ENCODE measurements at regions of chr18 and their contacts with region 1.

Region 1: DNA sequence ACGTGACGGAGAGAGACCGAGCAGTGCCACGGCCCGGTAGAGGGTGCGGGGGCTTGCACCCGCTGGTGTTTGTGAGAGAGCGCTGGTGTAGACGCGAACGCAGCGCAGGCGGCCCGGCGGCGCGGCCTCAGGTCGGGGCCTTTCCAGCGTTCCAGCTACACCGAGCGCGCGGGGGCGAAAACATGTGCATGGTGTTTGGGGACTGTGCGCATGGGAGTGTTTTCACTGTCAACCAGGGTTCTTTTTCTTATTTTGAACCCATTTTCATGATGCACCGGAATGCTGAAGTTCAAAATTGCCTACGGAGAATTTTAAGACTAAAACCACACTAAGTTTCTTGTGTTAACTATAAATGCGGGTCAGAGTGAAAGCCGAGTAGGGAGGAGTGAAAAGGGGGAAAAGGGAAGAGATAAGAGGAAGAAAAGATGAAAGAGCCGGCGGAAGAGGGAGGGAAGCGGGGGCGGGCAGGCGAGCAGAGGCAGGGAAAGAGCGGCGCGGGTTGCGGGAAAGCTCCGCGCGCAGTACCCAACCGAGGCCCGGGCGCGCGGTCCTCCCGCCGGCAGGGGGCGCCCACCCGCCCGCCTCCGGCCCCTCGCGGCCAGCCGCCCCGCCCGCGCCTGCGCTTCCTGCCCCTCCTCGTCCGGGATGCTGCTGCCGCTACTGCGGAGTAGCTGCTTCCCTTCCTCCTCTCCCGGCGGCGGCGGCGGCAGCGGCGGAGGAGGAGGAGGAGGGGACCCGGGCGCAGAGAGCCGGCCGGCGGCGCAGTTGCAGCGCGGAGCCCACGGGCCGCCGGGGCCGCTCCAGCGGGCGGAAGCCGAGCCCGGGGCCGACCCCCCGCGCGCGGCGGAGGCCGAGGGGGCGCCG is at the start of gene RAB12:
- DNase-seq: peak; percentile 87
- H3K4me3 Mint-ChIP-seq: peak within 1 kb of the TSS; percentile 89
- H3K27ac Mint-ChIP-seq: peak within 1 kb of the TSS; percentile 91
- H3K4me1 Mint-ChIP-seq: peaks cover 47% of the 10 kb centered on the region
- H3K27me3 Mint-ChIP-seq: no peaks in the 10 kb centered on the region
- total RNA-seq, gene RAB12: 11.0 to 11.9 TPM

Region 2: GRCh38 chr18:8478166-8478967 is 130.7 kb before region 1 on chr18:
- CTCF ChIA-PET with region 1: no interaction called
- intact Hi-C with region 1: loop called (anchors 2 kb)
- DNase-seq: peak; percentile 68
- H3K4me3 Mint-ChIP-seq: no peak overlapping the region
- H3K27ac Mint-ChIP-seq: no peak overlapping the region
- H3K4me1 Mint-ChIP-seq: no peaks in the 10 kb centered on the region
- H3K27me3 Mint-ChIP-seq: peaks cover 7% of the 10 kb centered on the region

Region 3: DNA sequence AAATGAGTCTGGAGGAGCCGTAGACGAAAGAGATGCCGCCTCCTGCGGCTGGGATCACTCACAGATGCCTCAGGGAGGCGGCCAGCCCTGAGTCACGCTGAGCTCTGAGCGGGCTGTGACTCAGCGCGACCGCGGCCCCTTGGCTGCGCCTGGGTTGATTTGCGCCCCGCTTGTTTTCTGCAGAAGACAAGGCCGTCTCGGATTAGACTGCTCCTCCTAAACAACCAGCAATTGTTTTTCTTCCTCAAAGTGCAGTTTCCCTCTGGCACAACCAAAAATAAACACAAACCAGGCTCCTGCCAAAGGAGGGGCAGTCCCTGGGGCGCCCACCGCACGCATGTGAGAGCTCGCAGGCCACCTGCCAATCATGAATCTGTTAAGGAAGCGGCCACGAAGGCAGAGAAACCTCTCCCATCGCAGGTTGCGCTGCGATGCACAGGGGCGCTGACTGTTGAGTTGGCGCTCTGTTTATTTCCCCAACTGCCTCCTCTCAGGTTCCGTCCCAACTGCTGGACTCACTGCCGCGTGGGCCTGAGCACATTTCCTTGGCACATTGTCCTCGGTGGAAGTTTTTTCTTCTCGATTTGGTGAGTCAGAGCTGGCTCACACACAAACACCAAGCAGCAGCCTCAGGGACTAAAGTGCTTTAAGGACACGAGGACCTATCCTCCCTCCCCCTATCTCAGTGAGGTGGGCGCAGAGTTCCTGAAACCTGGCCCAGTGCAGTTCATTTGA is 408.3 kb after region 1 on chr18:
- CTCF ChIA-PET with region 1: no interaction called
- intact Hi-C with region 1: loop called (anchors 1 kb)
- DNase-seq: peak; percentile 84
- H3K4me3 Mint-ChIP-seq: peak overlapping the region; percentile 56
- H3K27ac Mint-ChIP-seq: no peak overlapping the region
- H3K4me1 Mint-ChIP-seq: peaks cover 14% of the 10 kb centered on the region
- H3K27me3 Mint-ChIP-seq: peaks cover 8% of the 10 kb centered on the region

Region 4: DNA sequence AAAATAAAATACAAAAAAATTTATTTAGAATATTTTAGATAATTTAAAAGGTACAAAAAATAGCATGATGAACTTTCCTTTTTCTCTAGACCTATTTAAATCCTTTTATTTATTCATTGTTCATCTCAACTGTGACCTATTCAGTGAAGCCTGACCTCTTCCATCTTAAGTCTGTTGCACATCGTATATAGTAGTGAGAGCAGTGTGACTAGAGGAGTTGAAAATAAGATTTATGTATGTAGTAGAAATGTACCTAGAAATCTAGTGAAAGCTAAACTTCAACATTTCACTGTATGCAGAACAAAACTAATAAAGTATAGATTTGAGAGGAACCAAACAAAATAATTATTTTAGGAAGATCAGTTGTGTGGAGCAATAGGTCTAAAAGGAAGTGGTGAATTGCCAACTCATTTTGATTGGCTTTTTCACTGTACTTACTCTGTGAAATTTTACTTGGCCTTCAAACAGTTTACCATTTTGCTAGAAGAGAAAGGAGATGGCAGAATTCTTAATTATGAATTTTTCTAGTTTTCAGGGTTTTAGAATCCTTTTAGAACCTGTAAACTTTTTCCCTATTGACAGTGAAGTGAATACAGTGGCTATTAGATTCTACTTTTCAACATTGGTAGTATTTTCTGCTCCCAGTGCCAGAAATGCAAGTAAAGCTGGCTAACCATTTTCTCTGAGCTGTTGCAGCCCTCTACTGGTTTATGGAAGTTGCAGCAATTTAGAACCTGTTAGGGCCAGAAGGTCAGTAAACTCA is 538.6 kb after region 1 on chr18:
- CTCF ChIA-PET with region 1: no interaction called
- intact Hi-C with region 1: loop called (anchors 10 kb)
- DNase-seq: peak; percentile 42
- H3K4me3 Mint-ChIP-seq: no peak overlapping the region
- H3K27ac Mint-ChIP-seq: peak overlapping the region; percentile 76
- H3K4me1 Mint-ChIP-seq: peaks cover 73% of the 10 kb centered on the region
- H3K27me3 Mint-ChIP-seq: no peaks in the 10 kb centered on the region

Region 5: GRCh38 chr18:10525371-10526210 is 1916.6 kb after region 1 on chr18 and contains the start of gene NAPG:
- CTCF ChIA-PET with region 1: no interaction called
- intact Hi-C with region 1: loop called (anchors 10 kb)
- DNase-seq: peak; percentile 88
- H3K4me3 Mint-ChIP-seq: peak within 1 kb of the TSS; percentile 95
- H3K27ac Mint-ChIP-seq: peak within 1 kb of the TSS; percentile 89
- H3K4me1 Mint-ChIP-seq: peaks cover 45% of the 10 kb centered on the region
- H3K27me3 Mint-ChIP-seq: no peaks in the 10 kb centered on the region
- total RNA-seq, gene NAPG: 20.2 to 21.0 TPM

Measured in activated naive CD4-positive, alpha-beta T cell treated with anti-CD3 and anti-CD28 coated beads for 36 hours (primary cell).